OCI-LY7 (cell line): ENCODE measurements at regions of chr11 and their contacts with region 1.

Region 1: DNA sequence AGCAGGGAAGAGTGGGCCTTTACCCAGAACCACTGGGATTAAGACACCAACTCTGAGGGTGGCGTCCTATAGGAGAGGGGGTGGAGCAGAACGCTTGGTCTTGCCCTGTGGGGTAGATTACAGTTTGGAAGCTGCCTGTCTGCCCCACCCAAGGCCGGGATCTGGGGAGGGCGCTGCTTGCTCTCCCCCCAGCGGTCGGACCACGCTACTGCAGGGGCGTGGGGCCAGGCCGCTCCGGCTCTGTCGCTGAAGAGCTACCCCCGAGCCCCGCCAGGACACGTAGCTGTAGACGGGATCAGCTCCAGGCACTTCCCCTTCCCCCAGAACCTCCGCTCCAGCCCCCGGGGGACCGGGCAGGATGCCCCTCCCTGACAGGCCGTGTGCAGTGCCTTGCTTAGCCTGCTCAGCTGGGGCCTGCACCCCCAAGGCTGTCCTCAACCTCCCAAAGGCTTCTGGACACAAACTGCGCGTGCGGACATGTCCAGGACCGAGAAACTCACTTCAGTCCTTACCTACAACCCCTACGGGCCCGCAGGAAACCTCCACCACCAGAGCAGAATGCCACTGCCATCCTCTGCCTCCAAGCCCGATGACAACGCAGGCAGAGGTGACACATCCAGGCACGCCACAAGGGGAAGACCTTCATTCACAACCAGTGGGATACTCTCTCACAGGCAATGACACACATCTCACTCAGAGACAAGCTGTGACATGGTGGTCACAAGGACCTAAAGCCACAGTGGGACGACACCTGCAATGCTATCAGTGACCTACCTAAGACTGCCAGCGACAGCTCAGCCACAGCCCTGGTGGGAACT is 3.6 kb downstream of the AHNAK start:
- DNase-seq: peak; percentile 79
- H3K4me3 ChIP-seq: no peak overlapping the region
- H3K27ac ChIP-seq: no peak overlapping the region
- H3K4me1 ChIP-seq: peaks cover 38% of the 10 kb centered on the region
- CTCF ChIP-seq: peak; percentile 88

Region 2: DNA sequence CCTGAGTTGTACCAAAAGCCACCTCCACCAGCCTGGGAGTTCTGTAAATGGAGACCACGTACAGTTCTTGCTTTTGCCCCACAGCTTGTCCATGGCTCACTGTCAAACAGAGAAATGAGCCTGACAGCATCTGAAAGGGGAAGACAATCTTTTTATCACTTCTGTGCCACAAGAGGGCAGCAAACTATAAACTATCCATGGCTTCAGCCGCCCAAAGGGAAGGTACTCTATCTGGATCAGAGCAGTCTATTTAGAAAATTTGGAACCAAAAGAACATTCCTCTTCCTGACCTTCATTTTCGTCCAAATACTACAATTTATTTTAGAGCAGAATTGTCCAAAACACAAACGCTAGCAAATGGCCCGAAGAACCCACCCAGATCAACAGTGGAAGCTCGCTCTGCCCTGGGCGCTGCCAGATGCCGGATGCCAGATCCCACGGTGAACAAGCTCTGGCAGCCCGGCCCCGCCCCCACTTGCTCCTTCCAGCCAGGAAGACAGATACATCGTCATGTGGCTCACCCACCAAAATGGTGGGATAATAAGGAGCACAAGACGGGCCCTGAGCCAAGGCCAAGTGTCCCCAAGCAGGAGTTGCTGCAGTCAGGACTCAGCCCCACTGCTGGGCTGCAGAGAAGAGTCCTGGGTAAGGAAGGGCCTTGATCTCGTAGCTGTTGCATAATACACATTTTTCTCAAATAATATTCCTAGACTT is 148.0 kb before region 1 on chr11:
- CTCF ChIA-PET with region 1: interaction called, 4 read pairs
- POLR2A ChIA-PET with region 1: no interaction called
- intact Hi-C with region 1: loop called (anchors 1 kb)
- DNase-seq: peak; percentile 69
- H3K4me3 ChIP-seq: no peak overlapping the region
- H3K27ac ChIP-seq: no peak overlapping the region
- H3K4me1 ChIP-seq: no peaks in the 10 kb centered on the region
- CTCF ChIP-seq: peak; percentile 90

Region 3: GRCh38 chr11:62427630-62428233 is 115.2 kb before region 1 on chr11:
- CTCF ChIA-PET with region 1: interaction called, 19 read pairs
- POLR2A ChIA-PET with region 1: no interaction called
- intact Hi-C with region 1: loop called (anchors 1 kb)
- DNase-seq: no peak
- H3K4me3 ChIP-seq: no peak overlapping the region
- H3K27ac ChIP-seq: no peak overlapping the region
- H3K4me1 ChIP-seq: no peaks in the 10 kb centered on the region
- CTCF ChIP-seq: no peak

Region 4: DNA sequence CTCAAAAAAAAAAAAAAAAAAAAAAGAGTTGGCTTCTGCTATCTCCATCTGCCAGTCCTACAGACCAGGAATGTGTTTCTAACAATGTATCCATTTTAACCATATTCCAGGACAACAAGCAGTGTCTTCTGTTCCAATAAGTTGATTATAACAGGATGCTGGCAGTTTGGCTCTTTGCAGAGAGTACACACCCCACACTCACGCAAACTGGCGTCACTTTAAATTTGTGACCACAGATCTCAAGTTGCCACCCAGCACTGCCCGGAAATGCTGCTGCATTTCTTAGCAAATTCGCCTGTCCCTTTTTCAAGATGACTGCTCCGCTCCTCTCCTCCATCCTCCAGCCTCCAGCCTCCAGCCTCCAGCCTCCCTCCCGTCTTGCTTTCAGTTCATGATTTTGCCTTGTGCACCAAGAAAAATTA is 79.8 kb before region 1 on chr11:
- CTCF ChIA-PET with region 1: interaction called, 4 read pairs
- POLR2A ChIA-PET with region 1: interaction called, 3 read pairs
- intact Hi-C with region 1: loop called (anchors 1 kb)
- DNase-seq: no peak
- H3K4me3 ChIP-seq: no peak overlapping the region
- H3K27ac ChIP-seq: no peak overlapping the region
- H3K4me1 ChIP-seq: peaks cover 11% of the 10 kb centered on the region
- CTCF ChIP-seq: no peak

Region 5: GRCh38 chr11:62497132-62497915 is 45.6 kb before region 1 on chr11:
- CTCF ChIA-PET with region 1: interaction called, 5 read pairs
- POLR2A ChIA-PET with region 1: no interaction called
- intact Hi-C with region 1: loop called (anchors 1 kb)
- DNase-seq: peak; percentile 26
- H3K4me3 ChIP-seq: no peak overlapping the region
- H3K27ac ChIP-seq: no peak overlapping the region
- H3K4me1 ChIP-seq: no peaks in the 10 kb centered on the region
- CTCF ChIP-seq: peak; percentile 36

Region 6: DNA sequence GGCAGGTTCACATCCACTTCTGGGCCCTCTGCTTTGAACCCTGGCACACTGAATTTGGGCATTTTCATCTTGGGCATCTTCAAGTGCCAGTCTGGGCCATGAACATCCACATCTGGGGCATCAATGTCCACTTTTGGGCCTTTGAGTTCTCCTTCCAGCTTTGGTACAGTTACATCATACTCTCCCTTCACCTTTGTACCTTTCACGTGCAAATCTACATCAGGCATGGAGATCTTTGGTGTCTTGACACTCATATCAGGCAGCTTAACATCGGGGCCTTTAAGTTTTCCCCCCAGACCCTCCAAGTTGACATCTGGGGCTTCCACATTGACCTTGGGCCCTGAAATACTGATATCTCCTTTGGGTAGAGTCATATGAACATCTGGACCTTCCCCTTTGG is 10.9 kb before region 1 on chr11:
- CTCF ChIA-PET with region 1: no interaction called
- POLR2A ChIA-PET with region 1: no interaction called
- intact Hi-C with region 1: no loop called
- DNase-seq: no peak
- H3K4me3 ChIP-seq: no peak overlapping the region
- H3K27ac ChIP-seq: no peak overlapping the region
- H3K4me1 ChIP-seq: no peaks in the 10 kb centered on the region
- CTCF ChIP-seq: no peak

Region 7: GRCh38 chr11:62678770-62679696 is 136.1 kb after region 1 on chr11 and contains the start of gene UBXN1:
- CTCF ChIA-PET with region 1: no interaction called
- POLR2A ChIA-PET with region 1: no interaction called
- intact Hi-C with region 1: no loop called
- DNase-seq: peak; percentile 87
- H3K4me3 ChIP-seq: peak within 1 kb of the TSS; percentile 93
- H3K27ac ChIP-seq: peak within 1 kb of the TSS; percentile 57
- H3K4me1 ChIP-seq: peaks cover 35% of the 10 kb centered on the region
- CTCF ChIP-seq: no peak
- total RNA-seq, gene UBXN1: 101 and 123 TPM in 2 replicates

Region 8: DNA sequence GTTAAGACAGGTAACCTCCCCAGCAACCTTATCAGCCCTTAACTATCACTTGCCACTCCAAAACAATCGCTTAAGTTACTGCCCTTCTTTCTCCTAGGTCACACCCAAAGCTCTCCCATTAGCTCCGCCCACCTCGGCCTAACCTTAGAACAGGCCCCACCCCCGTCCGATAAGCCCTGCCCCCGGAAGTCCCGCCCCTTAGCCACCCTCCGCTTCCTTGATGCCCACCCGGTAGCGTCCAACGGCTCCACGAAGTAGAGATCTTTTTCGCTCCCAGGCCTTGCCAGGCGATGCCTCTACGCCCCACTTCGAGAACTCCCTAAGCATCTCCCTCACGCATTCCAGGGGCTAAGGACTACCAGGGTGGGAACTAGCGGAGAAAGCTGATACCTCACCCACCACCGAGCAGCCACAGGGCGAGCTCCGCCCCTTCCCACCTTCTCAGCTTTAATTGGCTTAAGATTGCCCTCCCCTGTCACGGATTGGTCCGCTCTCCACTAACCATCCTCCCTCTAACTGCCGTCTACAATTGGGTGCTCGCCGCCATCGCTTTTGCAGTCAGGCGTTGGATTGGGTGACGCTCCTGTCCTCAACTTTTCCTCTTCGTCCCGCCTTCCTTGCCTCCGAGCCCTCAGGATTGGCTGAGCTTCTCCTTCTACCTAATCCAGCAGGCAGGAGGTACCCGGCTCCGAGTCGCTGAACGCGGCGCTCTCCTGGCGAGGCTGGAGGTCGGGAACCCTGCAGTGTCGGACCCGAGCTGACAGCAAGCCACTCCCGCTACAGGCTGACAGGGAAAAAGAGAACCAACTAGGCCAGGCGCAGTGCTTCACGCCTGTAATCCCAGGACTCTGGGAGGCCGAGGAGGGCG is 211.0 kb after region 1 on chr11 and contains the start of gene ZBTB3:
- CTCF ChIA-PET with region 1: interaction called, 13 read pairs
- POLR2A ChIA-PET with region 1: no interaction called
- intact Hi-C with region 1: no loop called
- DNase-seq: peak; percentile 99
- H3K4me3 ChIP-seq: peak within 1 kb of the TSS; percentile 71
- H3K27ac ChIP-seq: peak within 1 kb of the TSS; percentile 60
- H3K4me1 ChIP-seq: peaks cover 20% of the 10 kb centered on the region
- CTCF ChIP-seq: no peak
- total RNA-seq, gene ZBTB3: 11.1 and 11.8 TPM in 2 replicates